WTC11 (cell line): ENCODE measurements at regions of chr12 and their contacts with region 1.

Region 1: DNA sequence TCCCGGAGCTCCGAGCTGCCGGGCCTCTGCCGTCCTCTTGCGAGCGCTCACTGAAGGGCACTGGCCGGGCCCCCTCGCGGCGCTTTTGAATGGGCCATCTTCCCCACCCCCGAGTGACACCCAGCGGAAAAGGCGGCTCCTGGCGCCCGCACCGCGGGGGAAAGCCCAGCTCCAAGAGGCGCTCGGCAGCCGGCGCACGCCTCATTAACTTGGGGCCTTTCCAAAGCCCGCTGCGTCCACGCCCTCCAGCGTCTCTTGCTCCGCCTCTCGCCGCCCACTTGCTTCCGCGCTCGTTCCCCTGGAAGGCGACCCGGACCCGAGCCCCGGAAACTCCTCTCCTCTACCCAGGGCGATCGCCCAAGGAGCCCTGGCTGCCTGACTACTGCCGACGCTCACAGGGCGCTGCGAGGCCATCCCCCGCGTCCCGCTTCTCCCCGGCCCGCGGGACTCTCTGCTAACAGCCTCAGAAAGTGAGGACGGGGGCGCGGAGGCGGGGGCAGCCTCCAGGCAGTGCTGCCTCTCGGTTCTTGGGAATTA is at the start of gene PHLDA1:
- DNase-seq: peak; percentile 92
- ATAC-seq: peak; percentile 69
- H3K4me3 Mint-ChIP-seq: peak within 1 kb of the TSS; percentile 91
- H3K27ac Mint-ChIP-seq: peak within 1 kb of the TSS; percentile 99
- H3K4me1 Mint-ChIP-seq: peaks cover 53% of the 10 kb centered on the region
- H3K27me3 Mint-ChIP-seq: peaks cover 3% of the 10 kb centered on the region; the same call in 1 of the 2 replicates
- CTCF ChIP-seq: no peak
- total RNA-seq, gene PHLDA1: 34.9 to 51.3 TPM (median 51.1 TPM) in 3 replicates

Region 2: DNA sequence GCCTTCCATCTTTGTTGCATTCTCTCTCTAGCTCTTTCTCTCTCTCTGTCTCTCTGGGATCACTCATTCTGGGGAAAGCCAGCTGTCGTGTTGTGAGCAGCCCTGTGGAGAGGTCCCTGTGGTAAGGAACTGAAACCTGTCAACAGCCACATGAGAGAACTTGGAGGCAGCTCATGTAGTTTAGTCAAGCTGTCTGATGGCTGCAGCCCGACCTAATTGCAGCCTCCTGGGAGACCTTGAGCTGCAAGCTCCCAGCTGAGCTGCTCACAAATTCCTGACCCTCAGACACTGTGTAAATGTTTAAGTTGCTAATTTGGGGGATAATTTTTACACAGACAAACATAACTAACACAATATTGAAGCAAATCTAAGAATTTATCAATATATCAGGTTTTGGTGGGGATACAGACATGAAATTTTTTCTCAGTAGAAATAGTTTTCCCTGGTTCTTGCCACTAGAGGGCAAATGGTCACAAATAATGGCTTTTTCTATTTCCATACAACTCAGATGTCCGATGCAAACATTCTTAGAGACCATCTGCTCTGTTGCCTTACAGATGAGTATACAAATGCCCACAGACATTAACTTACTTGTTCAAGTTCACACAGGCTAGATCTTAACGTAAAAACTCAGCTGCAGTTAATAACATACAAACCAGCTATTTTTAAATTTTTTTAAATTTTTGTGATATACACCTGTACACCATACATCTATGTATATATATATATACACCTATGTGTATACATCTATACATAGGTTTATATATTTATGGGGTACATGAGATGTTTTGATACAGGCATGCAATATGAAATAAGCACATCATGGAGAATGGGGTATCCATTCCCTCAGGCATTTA is 504.7 kb before region 1 on chr12:
- CTCF ChIA-PET with region 1: interaction called, 24 read pairs
- POLR2A ChIA-PET with region 1: interaction called, 4 read pairs
- DNase-seq: peak; percentile 13
- ATAC-seq: peak; percentile 67
- H3K4me3 Mint-ChIP-seq: no peak overlapping the region
- H3K27ac Mint-ChIP-seq: peak overlapping the region; percentile 76
- H3K4me1 Mint-ChIP-seq: peaks cover 14% of the 10 kb centered on the region
- H3K27me3 Mint-ChIP-seq: no peaks in the 10 kb centered on the region; the same call in 1 of the 2 replicates
- CTCF ChIP-seq: peak; percentile 57

Region 3: GRCh38 chr12:75623631-75624118 is 407.9 kb before region 1 on chr12:
- CTCF ChIA-PET with region 1: interaction called, 22 read pairs
- POLR2A ChIA-PET with region 1: interaction called, 3 read pairs
- DNase-seq: peak; percentile 28
- ATAC-seq: peak; percentile 98
- H3K4me3 Mint-ChIP-seq: no peak overlapping the region
- H3K27ac Mint-ChIP-seq: peak overlapping the region; percentile 75
- H3K4me1 Mint-ChIP-seq: peaks cover 26% of the 10 kb centered on the region
- H3K27me3 Mint-ChIP-seq: no peaks in the 10 kb centered on the region
- CTCF ChIP-seq: no peak

Region 4: GRCh38 chr12:75960086-75960910 is 71.3 kb before region 1 on chr12:
- CTCF ChIA-PET with region 1: interaction called, 18 read pairs
- POLR2A ChIA-PET with region 1: interaction called, 14 read pairs
- DNase-seq: peak; percentile 77
- ATAC-seq: peak; percentile 53
- H3K4me3 Mint-ChIP-seq: peak overlapping the region; percentile 48
- H3K27ac Mint-ChIP-seq: peak overlapping the region; percentile 96
- H3K4me1 Mint-ChIP-seq: peaks cover 64% of the 10 kb centered on the region
- H3K27me3 Mint-ChIP-seq: no peaks in the 10 kb centered on the region
- CTCF ChIP-seq: no peak